CD14-positive monocyte (primary cell): ENCODE measurements at regions of chr1 and their contacts with region 1.

Region 1: GRCh38 chr1:235866913-235867845 is 473 bp upstream of the LYST start:
- DNase-seq: peak; percentile 87 to 96 (median 92)
- H3K4me3 ChIP-seq: peak overlapping the region; percentile 86 to 99 (median 93)
- H3K4me3 Mint-ChIP-seq: peak overlapping the region; percentile 83 to 85
- H3K27ac ChIP-seq: peak overlapping the region; percentile 97 to 98
- H3K27ac Mint-ChIP-seq: peak overlapping the region in 6 of 7 donors; percentile 94 to 98 (median 97)
- H3K4me1 ChIP-seq: peaks cover 41 to 46% of the 10 kb centered on the region in 2 donors
- H3K4me1 Mint-ChIP-seq: peaks cover 41% of the 10 kb centered on the region
- H3K27me3 ChIP-seq: no peaks in the 10 kb centered on the region
- H3K27me3 Mint-ChIP-seq: no peaks in the 10 kb centered on the region
- CTCF ChIP-seq: no peak

Region 2: DNA sequence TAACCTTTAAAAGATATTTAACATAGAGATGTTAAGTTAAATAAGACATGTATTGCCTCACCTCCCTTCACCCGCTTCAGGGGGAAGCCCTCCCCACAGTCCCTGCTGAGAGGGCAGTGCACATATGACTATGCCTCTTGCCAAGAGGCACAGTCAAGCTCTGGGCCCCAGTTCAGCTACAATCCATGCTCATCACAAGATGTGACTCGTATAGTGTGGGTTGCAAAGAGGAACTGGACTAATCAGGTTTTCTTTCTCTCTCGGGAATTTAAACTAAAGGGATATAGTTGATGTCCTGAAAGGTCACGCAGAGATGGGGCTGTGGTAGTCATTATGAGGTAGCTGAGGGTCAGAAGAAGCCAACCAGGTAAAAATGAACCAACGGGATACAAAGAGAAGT is 36.0 kb before region 1 on chr1:
- intact Hi-C with region 1: loop called in 1 of 2 experiments (anchors 5 kb)
- DNase-seq: peak; percentile 70 to 89 (median 74)
- H3K4me3 ChIP-seq: no peak overlapping the region
- H3K4me3 Mint-ChIP-seq: no peak overlapping the region
- H3K27ac ChIP-seq: peak overlapping the region; percentile 9 to 71
- H3K27ac Mint-ChIP-seq: peak overlapping the region; percentile 73 to 97 (median 95)
- H3K4me1 ChIP-seq: peaks cover 17 to 18% of the 10 kb centered on the region in 2 donors
- H3K4me1 Mint-ChIP-seq: peaks cover 26% of the 10 kb centered on the region
- H3K27me3 ChIP-seq: no peaks in the 10 kb centered on the region
- H3K27me3 Mint-ChIP-seq: no peaks in the 10 kb centered on the region
- CTCF ChIP-seq: no peak

Region 3: DNA sequence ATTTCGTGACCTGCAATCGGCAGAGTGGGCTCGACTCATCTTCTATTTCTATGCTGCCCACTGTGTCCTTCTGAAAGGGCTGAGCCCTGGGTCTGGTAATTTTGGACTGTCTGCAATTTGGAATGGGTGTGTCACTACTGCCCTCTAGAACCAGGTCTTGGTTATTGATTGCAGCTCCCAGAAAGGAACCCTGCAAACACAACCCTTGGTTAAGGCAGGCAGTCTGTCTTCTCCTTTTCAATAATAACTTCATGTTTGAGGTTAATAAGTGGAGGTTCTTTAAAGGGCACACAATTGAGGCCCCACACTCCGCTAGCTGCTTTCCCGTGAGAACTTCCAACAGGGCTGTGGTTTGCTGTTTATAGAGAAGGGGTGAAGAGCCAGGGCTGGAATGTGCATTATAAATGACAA is 79.4 kb after region 1 on chr1:
- intact Hi-C with region 1: loop called in 1 of 2 experiments (anchors 5 kb)
- DNase-seq: no peak
- H3K4me3 ChIP-seq: peak overlapping the region in 1 of 3 experiments; percentile 60
- H3K4me3 Mint-ChIP-seq: peak overlapping the region; percentile 62 to 71
- H3K27ac ChIP-seq: peak overlapping the region; percentile 95 to 100
- H3K27ac Mint-ChIP-seq: peak overlapping the region; percentile 97 to 100 (median 99)
- H3K4me1 ChIP-seq: peaks cover 99 to 100% of the 10 kb centered on the region in 2 donors
- H3K4me1 Mint-ChIP-seq: peaks cover 96% of the 10 kb centered on the region
- H3K27me3 ChIP-seq: no peaks in the 10 kb centered on the region
- H3K27me3 Mint-ChIP-seq: peaks cover 0 to 2% (median 0%) of the 10 kb centered on the region in 3 donors
- CTCF ChIP-seq: peak; percentile 1